Esophagus muscularis mucosa (tissue), 4 donors: ENCODE measurements at regions of chr6 and their contacts with region 1.

Region 1: GRCh38 chr6:37169496-37170272 is at the start of gene PIM1:
- DNase-seq: peak; percentile 100
- H3K4me3 ChIP-seq: peak within 1 kb of the TSS; percentile 84 to 98 (median 92)
- H3K27ac ChIP-seq: peak within 1 kb of the TSS; percentile 96 to 99 (median 97)
- H3K4me1 ChIP-seq: peaks cover 30 to 47% (median 40%) of the 10 kb centered on the region in 4 donors
- H3K27me3 ChIP-seq: peaks cover 0 to 4% (median 0%) of the 10 kb centered on the region in 4 donors
- CTCF ChIP-seq: peak in 1 of 3 experiments; percentile 23
- EP300 ChIP-seq: no peak
- POLR2A ChIP-seq: peak; percentile 94
- total RNA-seq, gene PIM1: 26.0 to 176 (median 26.5) TPM

Region 2: DNA sequence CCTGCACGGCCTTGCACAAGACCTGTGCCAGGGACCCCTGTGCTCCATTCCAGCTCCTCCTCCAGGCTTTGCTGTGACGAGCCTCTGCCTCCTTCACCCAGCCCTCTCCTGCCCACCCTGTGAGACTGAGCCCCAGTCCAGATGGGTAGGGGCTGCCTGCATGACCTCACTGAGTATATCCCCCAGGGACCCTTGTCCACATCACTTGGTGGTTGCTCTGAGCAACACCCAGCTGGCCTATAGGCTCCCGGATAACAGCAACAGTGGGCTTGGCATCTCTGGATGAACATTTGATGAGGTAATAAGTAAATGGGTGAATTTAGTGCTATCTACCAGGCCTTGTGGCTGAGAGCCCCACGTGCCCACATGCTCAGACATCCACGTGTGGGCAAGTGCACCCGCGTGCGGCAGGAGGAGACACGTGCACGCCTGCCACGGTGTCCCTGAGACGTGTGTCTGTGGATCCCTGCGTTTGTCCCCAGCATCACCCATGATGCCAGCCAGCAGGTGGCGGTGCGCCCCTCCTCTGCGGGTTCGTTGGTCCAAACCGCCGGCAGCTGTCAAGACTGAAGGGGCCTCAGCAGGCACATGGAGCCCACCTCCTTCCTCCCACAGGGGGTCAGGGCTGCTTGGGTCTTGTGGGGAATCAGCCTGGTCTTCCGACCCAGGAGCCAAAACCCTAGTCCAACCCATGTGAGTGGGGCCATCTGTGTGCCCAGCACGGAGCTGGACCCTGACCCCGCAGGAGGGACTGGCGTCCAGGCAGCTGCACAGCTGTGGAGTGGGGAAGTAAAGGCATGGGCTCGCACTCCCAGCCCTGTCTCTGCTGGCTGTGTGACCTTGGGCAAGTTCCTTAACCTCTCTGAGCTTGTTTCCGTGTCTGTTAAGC is 118.3 kb before region 1 on chr6:
- intact Hi-C with region 1: loop called (anchors 2 kb)
- DNase-seq: peak; percentile 96
- H3K4me3 ChIP-seq: no peak overlapping the region
- H3K27ac ChIP-seq: peak overlapping the region in 2 of 4 donors; percentile 54 to 62
- H3K4me1 ChIP-seq: peaks cover 17 to 31% (median 22%) of the 10 kb centered on the region in 4 donors
- H3K27me3 ChIP-seq: no peaks in the 10 kb centered on the region
- CTCF ChIP-seq: peak; percentile 90 to 92 (median 91)
- EP300 ChIP-seq: no peak
- POLR2A ChIP-seq: no peak

Region 3: GRCh38 chr6:37102279-37103168 is 67.2 kb before region 1 on chr6:
- intact Hi-C with region 1: loop called (anchors 2 kb)
- DNase-seq: peak; percentile 96
- H3K4me3 ChIP-seq: peak overlapping the region; percentile 50 to 63 (median 56)
- H3K27ac ChIP-seq: peak overlapping the region; percentile 82 to 89 (median 84)
- H3K4me1 ChIP-seq: peaks cover 26 to 32% (median 30%) of the 10 kb centered on the region in 4 donors
- H3K27me3 ChIP-seq: no peaks in the 10 kb centered on the region
- CTCF ChIP-seq: no peak
- EP300 ChIP-seq: peak; percentile 85
- POLR2A ChIP-seq: no peak

Region 4: GRCh38 chr6:37125783-37126492 is 43.7 kb before region 1 on chr6:
- intact Hi-C with region 1: loop called (anchors 2 kb)
- DNase-seq: no peak
- H3K4me3 ChIP-seq: no peak overlapping the region
- H3K27ac ChIP-seq: no peak overlapping the region
- H3K4me1 ChIP-seq: peaks cover 19 to 41% (median 31%) of the 10 kb centered on the region in 4 donors
- H3K27me3 ChIP-seq: no peaks in the 10 kb centered on the region
- CTCF ChIP-seq: no peak
- EP300 ChIP-seq: no peak
- POLR2A ChIP-seq: no peak

Region 5: GRCh38 chr6:37131104-37131959 is 38.4 kb before region 1 on chr6:
- intact Hi-C with region 1: loop called (anchors 2 kb)
- DNase-seq: peak; percentile 93
- H3K4me3 ChIP-seq: peak overlapping the region; percentile 27 to 43 (median 38)
- H3K27ac ChIP-seq: peak overlapping the region; percentile 90 to 95 (median 93)
- H3K4me1 ChIP-seq: peaks cover 31 to 80% (median 70%) of the 10 kb centered on the region in 4 donors
- H3K27me3 ChIP-seq: no peaks in the 10 kb centered on the region
- CTCF ChIP-seq: no peak
- EP300 ChIP-seq: peak; percentile 85
- POLR2A ChIP-seq: no peak